ENCODE measurements at regions of chr1 and their contacts with region 1.

Region 1: GRCh38 chr1:37989361-37989930 is 376 bp downstream of the SF3A3 start:
- DNase-seq: peak; percentile 31
- H3K4me3 ChIP-seq: peak overlapping the region; percentile 80 to 91 (median 88)
- H3K27ac ChIP-seq: peak overlapping the region; percentile 79 to 91 (median 83)
- H3K4me1 ChIP-seq: peaks cover 9 to 23% (median 14%) of the 10 kb centered on the region in 4 donors
- H3K27me3 ChIP-seq: no peaks in the 10 kb centered on the region
- CTCF ChIP-seq: no peak
- EP300 ChIP-seq: no peak
- POLR2A ChIP-seq: no peak

Region 2: DNA sequence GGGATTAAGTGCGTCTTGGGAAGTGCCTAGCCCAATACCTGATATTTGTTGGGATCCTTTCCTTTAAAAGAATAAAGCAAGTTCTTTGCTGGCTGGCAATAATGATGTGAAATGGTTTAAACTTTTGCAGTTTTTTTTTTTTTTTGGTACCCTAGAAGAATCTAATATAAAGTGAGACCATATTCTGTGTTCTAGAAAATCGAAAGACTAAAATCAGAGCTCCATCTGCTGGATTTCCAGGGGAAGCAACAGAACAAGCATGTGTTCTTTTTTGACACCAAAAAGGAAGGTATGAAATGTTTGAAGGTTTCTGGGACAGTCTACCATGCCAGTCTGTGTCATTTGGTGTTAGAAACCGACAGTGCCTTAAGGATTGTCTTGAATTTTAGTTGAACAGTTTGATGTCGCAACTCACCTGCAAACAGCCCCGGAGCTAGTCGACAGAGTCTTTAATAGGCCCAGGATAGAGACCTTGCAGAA is 29.5 kb after region 1 on chr1:
- in situ Hi-C with region 1: no loop called
- intact Hi-C with region 1: loop called (anchors 2 kb)
- DNase-seq: no peak
- H3K4me3 ChIP-seq: no peak overlapping the region
- H3K27ac ChIP-seq: peak overlapping the region in 1 of 4 donors; percentile 7
- H3K4me1 ChIP-seq: peaks cover 1 to 32% (median 15%) of the 10 kb centered on the region in 4 donors
- H3K27me3 ChIP-seq: no peaks in the 10 kb centered on the region
- CTCF ChIP-seq: peak; percentile 29 to 52 (median 38)
- EP300 ChIP-seq: no peak
- POLR2A ChIP-seq: no peak

Region 3: DNA sequence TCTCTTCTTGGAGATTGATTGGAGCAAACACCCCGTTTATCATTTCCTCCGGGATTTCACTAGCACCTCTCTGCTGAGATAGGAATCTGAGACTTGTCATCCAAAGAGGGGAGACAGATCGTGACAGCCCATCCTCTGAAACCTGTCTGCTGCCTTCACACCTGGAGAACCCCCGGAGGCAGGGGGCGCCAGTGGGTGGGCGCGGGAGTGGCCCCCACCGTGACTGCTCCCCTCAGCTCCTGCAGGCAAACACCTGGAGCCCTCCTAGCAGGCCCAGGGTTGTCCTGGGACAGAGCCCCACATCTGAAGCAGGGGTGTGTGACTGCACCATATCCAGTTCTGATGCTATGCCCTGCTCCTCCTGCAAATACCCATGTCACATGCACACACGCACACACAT is 266.6 kb after region 1 on chr1:
- in situ Hi-C with region 1: no loop called
- intact Hi-C with region 1: no loop called
- DNase-seq: no peak
- H3K4me3 ChIP-seq: no peak overlapping the region
- H3K27ac ChIP-seq: no peak overlapping the region
- H3K4me1 ChIP-seq: no peaks in the 10 kb centered on the region
- H3K27me3 ChIP-seq: peaks cover 24% of the 10 kb centered on the region
- CTCF ChIP-seq: no peak
- EP300 ChIP-seq: no peak
- POLR2A ChIP-seq: no peak

Region 4: GRCh38 chr1:38370716-38371504 is 381.5 kb after region 1 on chr1:
- in situ Hi-C with region 1: no loop called
- intact Hi-C with region 1: no loop called
- DNase-seq: no peak
- H3K4me3 ChIP-seq: no peak overlapping the region
- H3K27ac ChIP-seq: no peak overlapping the region
- H3K4me1 ChIP-seq: no peaks in the 10 kb centered on the region
- H3K27me3 ChIP-seq: peaks cover 5% of the 10 kb centered on the region
- CTCF ChIP-seq: no peak
- EP300 ChIP-seq: no peak
- POLR2A ChIP-seq: no peak